ENCODE measurements at regions of chr2 and their contacts with region 1.

Region 1: GRCh38 chr2:205700331-205701132 is 18.2 kb downstream of the NRP2 start:
- DNase-seq: no peak
- H3K4me3 Mint-ChIP-seq: no peak overlapping the region
- H3K27ac Mint-ChIP-seq: peak overlapping the region; percentile 46
- H3K4me1 Mint-ChIP-seq: peaks cover 34% of the 10 kb centered on the region
- H3K27me3 Mint-ChIP-seq: no peaks in the 10 kb centered on the region
- CTCF ChIP-seq: no peak

Region 2: DNA sequence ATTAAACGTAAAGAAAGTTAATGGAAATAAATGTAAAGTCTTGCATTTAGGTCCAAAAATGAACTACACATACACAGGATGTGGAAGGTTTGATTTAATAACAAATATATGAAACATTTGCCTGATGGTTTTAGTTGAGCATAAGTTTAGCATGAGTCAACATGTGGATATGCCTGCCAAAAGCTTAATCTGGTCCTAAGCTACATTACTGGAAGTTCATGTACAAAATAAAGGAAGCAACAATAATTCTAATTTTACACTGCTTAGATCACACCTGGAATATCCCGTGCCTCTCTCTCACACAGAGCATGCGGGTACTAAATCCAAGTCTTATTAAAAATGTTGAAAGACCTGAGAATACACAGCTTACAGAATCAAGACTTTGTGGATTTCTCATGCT is 294.8 kb before region 1 on chr2:
- CTCF ChIA-PET with region 1: no interaction called
- intact Hi-C with region 1: no loop called
- DNase-seq: no peak
- H3K4me3 Mint-ChIP-seq: no peak overlapping the region
- H3K27ac Mint-ChIP-seq: no peak overlapping the region
- H3K4me1 Mint-ChIP-seq: peaks cover 12% of the 10 kb centered on the region
- H3K27me3 Mint-ChIP-seq: no peaks in the 10 kb centered on the region
- CTCF ChIP-seq: no peak

Region 3: DNA sequence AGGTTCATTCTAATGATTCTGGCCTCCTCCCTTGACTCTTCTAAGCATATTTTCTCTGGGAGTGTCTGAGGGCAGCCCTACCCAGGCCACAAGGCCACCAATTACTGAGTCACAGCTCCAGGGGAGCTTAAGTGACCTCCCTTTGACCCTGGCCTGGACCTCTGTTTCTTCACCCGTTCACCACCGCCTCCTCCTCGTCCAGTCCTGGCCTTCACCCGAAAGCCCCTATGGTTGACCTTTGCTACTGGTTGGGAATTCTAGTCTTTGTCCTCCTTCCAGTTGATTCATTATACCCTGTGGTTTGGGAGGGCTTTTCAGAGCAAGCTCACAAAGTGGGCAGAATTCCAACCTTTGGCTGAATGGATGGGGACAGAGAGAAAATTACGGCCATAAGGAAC is 54.4 kb after region 1 on chr2:
- CTCF ChIA-PET with region 1: no interaction called
- intact Hi-C with region 1: loop called (anchors 5 kb)
- DNase-seq: peak; percentile 76
- H3K4me3 Mint-ChIP-seq: peak overlapping the region; percentile 39
- H3K27ac Mint-ChIP-seq: peak overlapping the region; percentile 83
- H3K4me1 Mint-ChIP-seq: peaks cover 75% of the 10 kb centered on the region
- H3K27me3 Mint-ChIP-seq: no peaks in the 10 kb centered on the region
- CTCF ChIP-seq: no peak

Measured in Calu3 (cell line).